Transverse colon (tissue), 4 donors: ENCODE measurements at regions of chr12 and their contacts with region 1.

Region 1: DNA sequence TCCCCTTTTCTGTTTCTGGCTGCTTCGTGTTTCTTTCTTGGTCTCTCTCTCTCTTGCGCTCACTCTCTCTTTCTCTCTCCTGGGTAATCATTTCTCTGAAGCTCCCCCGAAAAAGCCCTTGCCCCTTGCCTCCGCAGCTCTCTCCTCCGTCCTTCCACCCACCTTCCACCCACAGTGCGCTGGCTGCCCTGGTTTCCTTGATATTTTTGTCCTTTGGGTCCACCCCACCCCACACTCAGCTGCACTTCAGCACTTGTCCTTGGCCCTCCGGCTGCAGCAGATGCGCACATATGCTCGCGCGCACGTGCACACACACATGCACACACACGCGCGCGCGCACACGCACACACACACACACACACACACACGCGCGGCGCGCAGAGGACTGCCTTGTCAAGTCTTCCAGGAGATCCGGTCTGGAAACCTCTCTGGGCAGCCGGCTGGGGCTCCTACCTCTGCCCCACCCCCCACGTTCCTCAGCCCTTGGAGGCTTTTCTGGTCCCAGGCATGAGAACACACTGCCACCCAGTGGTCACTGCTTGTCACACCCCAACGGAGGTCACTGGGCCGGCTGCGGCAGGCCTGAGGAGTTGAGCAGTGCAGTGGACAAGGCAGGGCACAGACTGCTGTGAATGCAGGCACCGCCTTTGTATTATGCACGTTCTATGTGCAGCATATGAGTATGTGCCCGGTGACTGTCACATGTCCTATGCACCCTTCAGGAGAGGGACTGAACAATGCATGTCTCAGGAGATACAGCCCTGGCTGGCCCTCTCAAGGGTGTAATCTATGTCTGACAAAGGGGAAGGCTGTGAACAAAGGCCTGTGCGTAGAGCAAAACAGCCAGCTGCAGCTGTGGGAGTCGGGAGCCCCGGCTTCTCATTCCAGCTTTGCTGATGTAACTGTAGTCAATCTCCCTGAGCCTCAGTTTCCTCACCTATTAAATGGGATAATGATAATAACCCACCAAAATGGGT is 6.5 kb downstream of the LAG3 start:
- DNase-seq: peak; percentile 96
- H3K4me3 ChIP-seq: peak overlapping the region in 3 of 4 donors; percentile 12 to 47 (median 29)
- H3K27ac ChIP-seq: peak overlapping the region; percentile 73 to 87 (median 82)
- H3K4me1 ChIP-seq: peaks cover 4 to 41% (median 15%) of the 10 kb centered on the region in 4 donors
- H3K27me3 ChIP-seq: no peaks in the 10 kb centered on the region
- CTCF ChIP-seq: peak; percentile 91 to 98 (median 95)
- EP300 ChIP-seq: no peak
- POLR2A ChIP-seq: no peak

Region 2: GRCh38 chr12:6613776-6614512 is 164.9 kb before region 1 on chr12:
- in situ Hi-C with region 1: no loop called
- intact Hi-C with region 1: loop called (anchors 10 kb)
- DNase-seq: peak; percentile 90
- H3K4me3 ChIP-seq: peak overlapping the region in 1 of 4 donors; percentile 15
- H3K27ac ChIP-seq: peak overlapping the region; percentile 90 to 97 (median 92)
- H3K4me1 ChIP-seq: peaks cover 27 to 42% (median 29%) of the 10 kb centered on the region in 4 donors
- H3K27me3 ChIP-seq: no peaks in the 10 kb centered on the region
- CTCF ChIP-seq: peak in 1 of 5 experiments; percentile 1
- EP300 ChIP-seq: no peak
- POLR2A ChIP-seq: peak; percentile 60

Region 3: GRCh38 chr12:6745741-6746525 is 32.9 kb before region 1 on chr12:
- in situ Hi-C with region 1: no loop called
- intact Hi-C with region 1: loop called (anchors 5 kb)
- DNase-seq: no peak
- H3K4me3 ChIP-seq: no peak overlapping the region
- H3K27ac ChIP-seq: peak overlapping the region in 1 of 4 donors; percentile 42
- H3K4me1 ChIP-seq: no peaks in the 10 kb centered on the region
- H3K27me3 ChIP-seq: no peaks in the 10 kb centered on the region
- CTCF ChIP-seq: no peak
- EP300 ChIP-seq: no peak
- POLR2A ChIP-seq: no peak